Activated CD4-positive, alpha-beta memory T cell treated with anti-CD3 and anti-CD28 coated beads for 36 hours (primary cell): ENCODE measurements at regions of chr5 and their contacts with region 1.

Region 1: DNA sequence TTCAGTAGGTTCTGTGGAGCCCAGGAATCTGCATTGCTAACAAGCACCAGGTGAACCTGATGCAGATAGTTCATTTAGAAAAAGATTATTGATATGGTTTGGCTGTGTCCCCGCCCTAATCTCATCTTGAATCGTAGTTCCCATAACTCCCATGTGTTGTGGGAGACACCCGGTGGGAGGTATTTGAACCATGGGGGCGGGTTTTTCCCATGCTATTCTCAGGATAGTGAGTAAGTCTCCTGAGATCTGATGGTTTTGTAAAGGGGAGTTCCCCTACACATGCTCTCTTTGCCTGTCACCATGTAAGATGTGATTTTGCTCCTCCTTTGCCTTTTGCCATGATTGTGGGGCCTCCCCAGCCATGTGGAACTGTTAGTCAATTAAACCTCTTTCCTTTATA is 212.0 kb downstream of the RAB3C start:
- DNase-seq: peak; percentile 73
- H3K4me3 Mint-ChIP-seq: no peak overlapping the region
- H3K27ac Mint-ChIP-seq: no peak overlapping the region
- H3K4me1 Mint-ChIP-seq: peaks cover 11% of the 10 kb centered on the region
- H3K27me3 Mint-ChIP-seq: peaks cover 17% of the 10 kb centered on the region

Region 2: GRCh38 chr5:58683567-58683966 is 111.3 kb before region 1 on chr5:
- CTCF ChIA-PET with region 1: no interaction called
- POLR2A ChIA-PET with region 1: no interaction called
- intact Hi-C with region 1: loop called (anchors 10 kb)
- DNase-seq: no peak
- H3K4me3 Mint-ChIP-seq: no peak overlapping the region
- H3K27ac Mint-ChIP-seq: no peak overlapping the region
- H3K4me1 Mint-ChIP-seq: peaks cover 2% of the 10 kb centered on the region
- H3K27me3 Mint-ChIP-seq: peaks cover 2% of the 10 kb centered on the region

Region 3: GRCh38 chr5:58759745-58760144 is 35.1 kb before region 1 on chr5:
- CTCF ChIA-PET with region 1: no interaction called
- POLR2A ChIA-PET with region 1: no interaction called
- intact Hi-C with region 1: loop called (anchors 2 kb)
- DNase-seq: no peak
- H3K4me3 Mint-ChIP-seq: peak overlapping the region; percentile 46
- H3K27ac Mint-ChIP-seq: no peak overlapping the region
- H3K4me1 Mint-ChIP-seq: peaks cover 36% of the 10 kb centered on the region
- H3K27me3 Mint-ChIP-seq: no peaks in the 10 kb centered on the region

Region 4: DNA sequence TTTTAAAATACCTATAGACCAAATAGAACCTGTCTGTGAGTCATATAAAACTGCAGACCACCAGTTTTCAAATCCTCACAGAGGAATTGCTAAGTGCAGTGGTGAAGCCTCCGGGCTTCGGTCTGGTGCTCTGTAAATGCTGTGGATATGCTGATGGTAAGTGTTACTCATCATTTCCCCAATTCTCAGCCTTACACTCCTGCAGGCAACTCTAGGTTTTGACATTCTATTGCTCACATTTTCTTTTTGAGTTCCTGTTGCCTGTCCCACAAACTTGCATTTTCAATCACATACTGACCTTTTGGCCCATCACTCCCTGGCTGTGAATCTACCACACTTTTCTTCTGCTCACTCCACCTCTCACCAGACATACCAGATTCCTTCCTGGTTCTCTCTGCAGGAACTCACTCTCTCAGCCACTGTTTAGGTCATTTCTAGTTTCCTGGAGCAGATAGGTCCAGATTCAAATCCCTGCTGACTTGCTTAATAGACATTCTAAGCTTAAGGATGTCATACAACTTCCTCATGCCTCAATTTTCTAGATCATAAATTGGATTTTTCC is 19.1 kb before region 1 on chr5:
- CTCF ChIA-PET with region 1: no interaction called
- POLR2A ChIA-PET with region 1: interaction called, 3 read pairs
- intact Hi-C with region 1: loop called (anchors 2 kb)
- DNase-seq: peak; percentile 21
- H3K4me3 Mint-ChIP-seq: no peak overlapping the region
- H3K27ac Mint-ChIP-seq: no peak overlapping the region
- H3K4me1 Mint-ChIP-seq: peaks cover 11% of the 10 kb centered on the region
- H3K27me3 Mint-ChIP-seq: peaks cover 26% of the 10 kb centered on the region